Spleen (tissue), 13 donors: ENCODE measurements at regions of chrX and their contacts with region 1.

Region 1: GRCh38 chrX:47193475-47194193 is at the start of gene UBA1:
- DNase-seq: peak; percentile 99
- H3K4me3 ChIP-seq: peak within 1 kb of the TSS; percentile 49 to 94 (median 64)
- H3K27ac ChIP-seq: peak within 1 kb of the TSS; percentile 90 to 98 (median 95)
- H3K4me1 ChIP-seq: peaks cover 29 to 78% (median 63%) of the 10 kb centered on the region in 6 donors
- H3K27me3 ChIP-seq: peaks cover 0 to 13% (median 0%) of the 10 kb centered on the region in 7 donors
- CTCF ChIP-seq: peak; percentile 85 to 99 (median 91)
- POLR2A ChIP-seq: peak in 1 of 3 donors; percentile 74
- total RNA-seq, gene UBA1: 172 to 207 (median 194) TPM

Region 2: DNA sequence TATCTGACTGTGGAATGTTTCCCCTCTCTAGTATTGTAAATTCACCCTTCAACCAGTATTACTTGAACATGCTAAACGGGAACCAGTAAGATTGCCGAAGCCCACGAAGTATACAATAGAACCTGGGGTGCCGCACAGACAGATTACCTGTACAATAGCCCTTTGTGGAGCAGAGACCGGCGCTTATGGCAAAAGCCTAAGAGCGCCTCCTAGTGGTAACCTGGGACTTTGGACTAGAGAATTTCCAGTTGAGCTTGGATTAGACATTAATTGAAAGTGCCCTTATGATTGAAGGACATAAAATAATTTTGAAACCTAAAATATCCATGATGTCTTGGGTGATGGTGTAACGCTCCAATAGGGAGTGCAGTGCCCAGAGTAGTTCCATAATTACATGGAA is 190.9 kb after region 1 on chrX:
- intact Hi-C with region 1: loop called (anchors 5 kb)
- DNase-seq: peak; percentile 80
- H3K4me3 ChIP-seq: no peak overlapping the region
- H3K27ac ChIP-seq: no peak overlapping the region
- H3K4me1 ChIP-seq: peaks cover 0 to 8% (median 0%) of the 10 kb centered on the region in 6 donors
- H3K27me3 ChIP-seq: peaks cover 0 to 12% (median 0%) of the 10 kb centered on the region in 7 donors
- CTCF ChIP-seq: peak; percentile 41 to 81 (median 68)
- POLR2A ChIP-seq: no peak

Region 3: GRCh38 chrX:47523297-47523696 is 329.7 kb after region 1 on chrX:
- intact Hi-C with region 1: loop called (anchors 10 kb)
- DNase-seq: peak; percentile 96
- H3K4me3 ChIP-seq: peak overlapping the region; percentile 28 to 74 (median 46)
- H3K27ac ChIP-seq: peak overlapping the region in 4 of 8 donors; percentile 8 to 63 (median 42)
- H3K4me1 ChIP-seq: peaks cover 0 to 10% (median 5%) of the 10 kb centered on the region in 6 donors
- H3K27me3 ChIP-seq: peaks cover 0 to 4% (median 0%) of the 10 kb centered on the region in 7 donors
- CTCF ChIP-seq: peak; percentile 72 to 91 (median 84)
- POLR2A ChIP-seq: no peak